ENCODE measurements at regions of chr1 and their contacts with region 1.

Region 1: DNA sequence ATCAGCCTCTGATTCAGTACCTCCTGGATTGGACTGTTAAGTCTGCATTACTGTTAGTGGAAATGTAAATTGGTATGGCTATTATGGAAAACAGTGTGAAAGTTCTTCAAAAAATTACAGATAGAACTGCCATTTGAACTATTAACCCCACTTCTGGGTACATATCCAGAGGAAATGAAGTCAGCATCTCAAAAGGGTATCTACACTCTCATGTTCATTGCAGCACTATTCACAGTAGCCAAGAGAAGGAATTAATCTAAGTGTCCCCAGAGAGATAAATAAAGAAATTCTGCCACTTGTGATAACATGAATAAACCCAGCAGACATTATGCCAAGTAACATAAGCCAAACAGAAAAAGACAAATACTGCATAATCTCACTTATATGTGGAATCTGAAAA is 676.0 kb downstream of the PLA2G4A start:
- DNase-seq: no peak
- ATAC-seq: no peak
- H3K4me3 ChIP-seq: no peak overlapping the region
- H3K27ac ChIP-seq: no peak overlapping the region
- H3K4me1 ChIP-seq: no peaks in the 10 kb centered on the region
- H3K27me3 ChIP-seq: no peaks in the 10 kb centered on the region
- CTCF ChIP-seq: no peak

Region 2: GRCh38 chr1:187374130-187374529 is 130.6 kb before region 1 on chr1:
- CTCF ChIA-PET with region 1: no interaction called
- POLR2A ChIA-PET with region 1: no interaction called
- in situ Hi-C with region 1: no loop called
- intact Hi-C with region 1: no loop called
- DNase-seq: no peak
- ATAC-seq: no peak
- H3K4me3 ChIP-seq: no peak overlapping the region
- H3K27ac ChIP-seq: no peak overlapping the region
- H3K4me1 ChIP-seq: no peaks in the 10 kb centered on the region
- H3K27me3 ChIP-seq: no peaks in the 10 kb centered on the region
- CTCF ChIP-seq: no peak

Region 3: GRCh38 chr1:187641463-187641862 is 136.7 kb after region 1 on chr1:
- CTCF ChIA-PET with region 1: no interaction called
- POLR2A ChIA-PET with region 1: no interaction called
- in situ Hi-C with region 1: no loop called
- intact Hi-C with region 1: no loop called
- DNase-seq: no peak
- ATAC-seq: no peak
- H3K4me3 ChIP-seq: no peak overlapping the region
- H3K27ac ChIP-seq: no peak overlapping the region
- H3K4me1 ChIP-seq: no peaks in the 10 kb centered on the region
- H3K27me3 ChIP-seq: no peaks in the 10 kb centered on the region
- CTCF ChIP-seq: no peak

Region 4: DNA sequence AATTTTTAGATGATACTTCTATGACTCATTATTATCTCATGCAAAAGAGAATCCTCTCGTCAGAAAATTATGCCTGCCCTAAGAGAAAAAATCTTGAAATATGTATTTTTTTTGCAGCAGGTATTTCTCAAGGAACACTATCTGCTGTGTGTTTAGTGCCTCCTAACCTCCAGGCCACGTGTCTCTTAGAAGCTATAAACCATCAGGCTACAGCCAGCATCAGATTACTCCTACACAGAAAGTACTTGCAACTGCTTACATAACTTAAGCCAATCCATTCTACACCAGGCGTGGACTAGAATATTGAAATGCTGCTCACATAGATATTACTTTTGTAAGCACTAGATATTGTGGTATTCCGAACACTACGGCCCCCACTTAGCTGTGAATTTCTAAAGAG is 257.3 kb after region 1 on chr1:
- CTCF ChIA-PET with region 1: no interaction called
- POLR2A ChIA-PET with region 1: no interaction called
- in situ Hi-C with region 1: no loop called
- intact Hi-C with region 1: no loop called
- DNase-seq: no peak
- ATAC-seq: no peak
- H3K4me3 ChIP-seq: no peak overlapping the region
- H3K27ac ChIP-seq: no peak overlapping the region
- H3K4me1 ChIP-seq: no peaks in the 10 kb centered on the region
- H3K27me3 ChIP-seq: no peaks in the 10 kb centered on the region
- CTCF ChIP-seq: no peak

Region 5: DNA sequence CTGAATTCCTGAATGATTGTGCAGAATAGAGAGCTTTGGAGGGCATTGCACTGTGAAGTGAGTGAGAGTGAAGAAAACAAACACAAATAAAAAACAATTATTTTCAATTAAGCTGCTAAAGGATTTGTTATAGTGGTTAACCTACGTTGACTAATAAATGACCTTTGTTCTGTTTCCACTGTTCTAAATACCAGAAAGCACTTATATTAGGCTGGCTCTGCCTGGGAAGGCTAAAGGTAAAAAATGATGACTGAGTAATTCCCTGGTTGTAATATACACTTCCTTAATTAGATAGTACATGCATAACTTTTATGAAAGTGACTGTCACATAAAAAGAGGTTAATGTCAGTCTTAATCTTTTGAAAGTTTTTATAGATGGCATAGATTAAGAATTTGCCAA is 984.9 kb after region 1 on chr1:
- CTCF ChIA-PET with region 1: no interaction called
- POLR2A ChIA-PET with region 1: interaction called, 10 read pairs
- in situ Hi-C with region 1: no loop called
- intact Hi-C with region 1: no loop called
- DNase-seq: peak; percentile 4
- ATAC-seq: peak; percentile 70; the same call in 1 of the 2 replicates
- H3K4me3 ChIP-seq: no peak overlapping the region
- H3K27ac ChIP-seq: no peak overlapping the region
- H3K4me1 ChIP-seq: peaks cover 2% of the 10 kb centered on the region; the same call in 1 of the 2 replicates
- H3K27me3 ChIP-seq: no peaks in the 10 kb centered on the region
- CTCF ChIP-seq: no peak